ENCODE measurements at regions of chr6 and their contacts with region 1.

Region 1: GRCh38 chr6:3956054-3956453 is 106.9 kb downstream of the FAM50B start:
- DNase-seq: peak; percentile 39
- ATAC-seq: no peak
- H3K4me3 ChIP-seq: no peak overlapping the region
- H3K27ac ChIP-seq: no peak overlapping the region
- H3K4me1 ChIP-seq: peaks cover 9% of the 10 kb centered on the region
- H3K27me3 ChIP-seq: peaks cover 0 to 20% of the 10 kb centered on the region in 2 experiments; a peak in 2 of 5 replicates
- CTCF ChIP-seq: no peak
- EP300 ChIP-seq: no peak
- POLR2A ChIP-seq: no peak
- RAD21 ChIP-seq: no peak

Region 2: GRCh38 chr6:4220619-4221018 is 264.6 kb after region 1 on chr6:
- CTCF ChIA-PET with region 1: no interaction called
- POLR2A ChIA-PET with region 1: no interaction called
- in situ Hi-C with region 1: no loop called
- intact Hi-C with region 1: no loop called
- DNase-seq: no peak
- ATAC-seq: no peak
- H3K4me3 ChIP-seq: no peak overlapping the region
- H3K27ac ChIP-seq: no peak overlapping the region
- H3K4me1 ChIP-seq: no peaks in the 10 kb centered on the region
- H3K27me3 ChIP-seq: peaks cover 0 to 2% of the 10 kb centered on the region in 2 experiments; a peak in 1 of 5 replicates
- CTCF ChIP-seq: no peak
- EP300 ChIP-seq: no peak
- POLR2A ChIP-seq: no peak
- RAD21 ChIP-seq: no peak

Region 3: GRCh38 chr6:4281341-4282293 is 325.6 kb after region 1 on chr6:
- CTCF ChIA-PET with region 1: no interaction called
- POLR2A ChIA-PET with region 1: no interaction called
- in situ Hi-C with region 1: no loop called
- intact Hi-C with region 1: no loop called
- DNase-seq: no peak
- ATAC-seq: peak; percentile 67
- H3K4me3 ChIP-seq: no peak overlapping the region
- H3K27ac ChIP-seq: no peak overlapping the region
- H3K4me1 ChIP-seq: no peaks in the 10 kb centered on the region
- H3K27me3 ChIP-seq: peaks cover 8 to 67% of the 10 kb centered on the region in 2 experiments; a peak in 4 of 5 replicates
- CTCF ChIP-seq: peak; percentile 58
- EP300 ChIP-seq: no peak
- POLR2A ChIP-seq: no peak
- RAD21 ChIP-seq: no peak

Region 4: DNA sequence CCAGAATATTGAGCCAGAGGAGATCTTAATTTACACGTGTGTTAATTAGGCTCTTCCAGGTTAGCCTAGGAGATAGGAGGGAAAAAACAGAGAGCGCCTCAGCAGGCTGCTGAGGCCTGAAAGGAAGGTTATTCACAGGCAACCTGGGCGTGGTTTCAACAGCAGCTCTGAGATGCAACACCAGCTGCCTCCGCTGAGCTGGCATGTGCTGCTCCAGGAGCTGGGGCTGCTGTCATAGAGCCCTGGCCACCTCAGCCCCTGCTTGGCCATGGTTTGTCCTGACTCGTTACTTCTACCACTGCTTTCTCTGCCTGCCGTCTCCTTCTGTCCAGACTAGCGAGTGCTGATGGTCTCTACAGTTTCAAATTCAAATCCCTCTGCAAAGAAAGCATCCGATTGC is 1080.2 kb after region 1 on chr6:
- CTCF ChIA-PET with region 1: no interaction called
- POLR2A ChIA-PET with region 1: no interaction called
- in situ Hi-C with region 1: loop called (anchors 5 kb)
- intact Hi-C with region 1: no loop called
- DNase-seq: peak; percentile 64
- ATAC-seq: peak; percentile 99
- H3K4me3 ChIP-seq: no peak overlapping the region
- H3K27ac ChIP-seq: no peak overlapping the region
- H3K4me1 ChIP-seq: peaks cover 28% of the 10 kb centered on the region
- H3K27me3 ChIP-seq: no peaks in the 10 kb centered on the region
- CTCF ChIP-seq: no peak
- EP300 ChIP-seq: no peak
- POLR2A ChIP-seq: no peak
- RAD21 ChIP-seq: no peak

Measured in HepG2 (cell line).